ENCODE measurements at regions of chr4 and their contacts with region 1.

Region 1: DNA sequence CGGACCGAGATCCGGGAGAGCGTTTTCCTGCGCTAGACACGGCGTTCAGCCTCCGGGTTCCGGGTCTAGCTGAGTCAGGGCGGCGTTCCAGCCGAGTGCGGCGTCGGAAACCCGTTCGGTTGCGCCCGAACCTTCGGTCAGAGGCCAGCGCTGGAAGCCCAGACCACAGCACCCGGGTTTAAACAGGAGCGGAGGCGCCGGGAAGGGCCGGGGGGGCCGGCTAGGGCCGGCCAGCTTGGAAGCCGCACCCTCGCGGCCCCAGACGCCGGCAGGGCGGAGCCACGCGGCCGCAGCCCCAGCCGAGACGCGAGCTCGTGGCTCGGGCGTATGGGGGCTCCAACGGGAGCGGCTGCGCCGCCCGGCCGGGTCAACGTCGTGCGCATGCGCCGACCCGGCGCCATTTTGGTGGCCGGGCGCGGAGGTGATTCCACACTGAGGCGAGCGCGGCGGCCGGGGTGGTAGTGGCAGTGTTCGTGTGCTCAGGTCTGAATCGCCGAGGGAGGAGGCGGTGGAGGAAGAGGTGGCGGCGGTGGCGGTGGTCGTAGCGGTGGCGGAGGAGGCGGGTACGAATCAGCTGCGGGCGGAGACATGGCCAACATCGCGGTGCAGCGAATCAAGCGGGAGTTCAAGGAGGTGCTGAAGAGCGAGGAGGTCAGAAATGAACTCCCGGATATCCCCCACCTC is at the start of gene UBE2K:
- DNase-seq: peak; percentile 92 to 97
- H3K4me3 ChIP-seq: peak within 1 kb of the TSS; percentile 60 to 88 (median 82)
- H3K27ac ChIP-seq: peak within 1 kb of the TSS; percentile 90 to 100 (median 96)
- H3K4me1 ChIP-seq: peaks cover 24 to 55% (median 45%) of the 10 kb centered on the region in 4 donors
- H3K27me3 ChIP-seq: no peaks in the 10 kb centered on the region
- CTCF ChIP-seq: no peak
- EP300 ChIP-seq: no peak
- POLR2A ChIP-seq: peak in 1 of 4 donors; percentile 52
- total RNA-seq, gene UBE2K: 7.0 to 187 (median 68.3) TPM

Region 2: DNA sequence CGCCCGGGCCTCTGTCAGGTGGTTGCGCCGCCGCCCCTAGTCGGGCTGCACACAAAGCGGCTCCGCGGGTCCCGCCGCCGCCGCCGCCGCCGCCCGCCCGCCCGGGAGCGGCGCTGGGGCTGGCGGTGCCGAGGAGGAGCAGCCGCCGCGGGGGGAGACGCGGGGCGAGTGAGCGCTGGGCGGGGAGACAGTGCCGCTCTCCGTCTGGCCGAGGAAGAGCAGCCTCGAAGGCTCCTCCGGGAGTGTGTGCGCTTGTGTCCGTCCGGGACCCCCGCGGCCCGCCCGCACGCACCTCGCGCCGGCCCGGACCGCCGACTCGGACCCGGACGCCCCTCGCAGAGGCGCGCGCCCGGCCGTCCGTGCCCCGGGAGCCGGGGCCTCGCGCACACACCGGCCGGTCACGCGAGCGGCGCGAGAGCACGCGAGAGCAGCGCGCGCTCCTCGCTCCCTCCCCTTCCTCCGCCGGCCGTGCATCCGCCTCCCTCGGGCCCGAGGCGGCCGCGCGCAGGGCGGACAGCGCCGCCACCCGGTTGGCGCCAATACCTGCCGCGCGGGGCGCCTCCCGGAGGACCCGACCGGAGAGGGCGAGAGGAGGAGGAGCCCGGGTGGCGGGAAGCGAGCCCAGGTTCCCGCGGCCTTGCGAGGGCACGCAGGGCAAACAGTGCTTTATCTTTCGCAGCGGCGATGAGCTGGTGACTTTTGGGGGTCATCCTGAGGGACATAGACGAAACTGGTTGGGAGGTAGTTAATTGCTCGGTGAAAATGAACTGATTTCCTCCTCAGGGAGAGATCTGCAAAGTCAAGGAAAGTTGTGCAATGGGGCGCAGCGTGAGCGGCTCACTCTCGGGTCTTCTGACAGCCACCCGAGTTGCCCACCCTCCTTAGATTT is 279.9 kb after region 1 on chr4 and contains the start of gene PDS5A:
- intact Hi-C with region 1: loop called (anchors 5 kb)
- DNase-seq: peak; percentile 91 to 98
- H3K4me3 ChIP-seq: peak within 1 kb of the TSS; percentile 80 to 99 (median 91)
- H3K27ac ChIP-seq: peak within 1 kb of the TSS; percentile 96 to 98 (median 97)
- H3K4me1 ChIP-seq: peaks cover 16 to 47% (median 29%) of the 10 kb centered on the region in 4 donors
- H3K27me3 ChIP-seq: no peaks in the 10 kb centered on the region
- CTCF ChIP-seq: peak in 5 of 7 experiments; percentile 54 to 94 (median 82)
- EP300 ChIP-seq: no peak
- POLR2A ChIP-seq: no peak
- total RNA-seq, gene PDS5A: 76.4 to 117 (median 111) TPM